Activated T-helper 1 cell treated with anti-CD3 and anti-CD28 coated beads, Interleukin-12 subunit alpha, Interleukin-12 subunit beta, Interleukin-2, Interleukin-4 antibody, amounts not matched to agents 30 ng/mL and 10 ng/mL and 1 ng/mL, durations not matched to agents 14 hours and 24 hours and 36 hours (primary cell): ENCODE measurements at regions of chr15 and their contacts with region 1.

Region 1: DNA sequence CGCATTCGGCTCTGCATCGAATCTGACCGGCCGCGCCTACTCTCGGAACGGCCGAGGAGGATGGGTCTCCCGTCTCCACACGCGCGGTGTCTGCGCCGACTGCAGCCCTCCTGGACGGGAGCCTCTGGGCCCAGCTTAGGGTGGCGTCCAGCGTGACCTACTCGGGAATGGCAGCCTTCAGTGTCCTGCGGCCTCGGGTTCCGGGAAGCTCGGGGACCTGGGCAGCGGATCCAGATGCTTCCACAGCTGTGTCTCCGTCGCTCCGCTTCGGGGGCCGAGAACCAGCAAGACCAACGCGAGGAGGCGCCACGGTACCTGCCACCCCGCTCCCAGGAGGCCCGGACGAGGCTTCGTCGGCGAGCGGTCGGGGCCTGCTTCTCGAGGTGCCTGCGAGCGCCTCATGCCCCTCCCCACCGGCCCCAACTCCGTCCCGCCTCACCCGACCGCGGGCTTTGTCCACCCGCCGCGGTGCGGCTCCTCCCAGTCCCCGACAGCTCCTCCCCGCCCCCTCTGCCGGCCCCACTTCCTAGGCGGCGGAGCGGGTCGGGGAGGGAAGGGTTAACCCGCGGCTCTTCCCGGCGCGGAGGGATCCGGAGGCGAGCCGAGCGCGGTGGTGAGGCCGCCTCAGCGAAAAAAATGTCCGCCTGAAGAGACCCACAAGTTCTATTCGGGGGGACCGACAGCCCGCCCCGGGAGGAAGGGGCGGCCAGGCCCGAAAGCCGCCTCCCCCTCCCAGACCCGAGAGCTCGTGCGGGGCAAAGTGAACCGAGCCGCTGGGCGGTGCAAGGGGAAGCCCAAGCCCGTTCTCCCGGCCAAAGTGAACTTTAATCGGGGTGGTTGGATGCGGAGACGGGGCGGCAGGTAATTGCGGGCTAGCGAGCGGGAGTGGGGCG is at the start of gene TCF12:
- DNase-seq: peak; percentile 87
- H3K4me3 Mint-ChIP-seq: peak within 1 kb of the TSS; percentile 82
- H3K27ac Mint-ChIP-seq: peak within 1 kb of the TSS; percentile 63
- H3K4me1 Mint-ChIP-seq: peaks cover 39% of the 10 kb centered on the region
- H3K27me3 Mint-ChIP-seq: no peaks in the 10 kb centered on the region
- total RNA-seq, gene TCF12: 85.7 and 89.2 TPM in 2 replicates

Region 2: DNA sequence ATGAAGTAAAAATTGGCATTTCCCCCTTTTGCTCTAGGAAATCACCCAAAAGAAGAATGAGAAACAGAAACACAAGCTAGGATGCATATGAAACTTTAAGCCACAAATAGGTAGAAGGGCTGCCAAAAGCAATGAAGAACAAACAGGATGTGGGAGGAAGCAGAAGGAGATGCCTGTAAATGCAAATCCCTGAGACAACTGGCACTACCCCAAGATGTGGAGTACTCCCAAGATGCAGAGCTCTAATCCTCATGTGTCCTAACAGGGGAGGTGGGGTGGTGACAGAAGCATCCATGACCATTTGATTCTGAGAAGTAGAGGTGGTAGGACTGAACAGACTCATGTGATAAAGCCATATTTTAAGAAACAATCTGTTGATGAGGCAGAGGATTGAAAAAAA is 153.0 kb before region 1 on chr15:
- intact Hi-C with region 1: loop called (anchors 5 kb)
- DNase-seq: peak; percentile 10
- H3K4me3 Mint-ChIP-seq: peak overlapping the region; percentile 16
- H3K27ac Mint-ChIP-seq: peak overlapping the region; percentile 83
- H3K4me1 Mint-ChIP-seq: peaks cover 40% of the 10 kb centered on the region
- H3K27me3 Mint-ChIP-seq: no peaks in the 10 kb centered on the region

Region 3: DNA sequence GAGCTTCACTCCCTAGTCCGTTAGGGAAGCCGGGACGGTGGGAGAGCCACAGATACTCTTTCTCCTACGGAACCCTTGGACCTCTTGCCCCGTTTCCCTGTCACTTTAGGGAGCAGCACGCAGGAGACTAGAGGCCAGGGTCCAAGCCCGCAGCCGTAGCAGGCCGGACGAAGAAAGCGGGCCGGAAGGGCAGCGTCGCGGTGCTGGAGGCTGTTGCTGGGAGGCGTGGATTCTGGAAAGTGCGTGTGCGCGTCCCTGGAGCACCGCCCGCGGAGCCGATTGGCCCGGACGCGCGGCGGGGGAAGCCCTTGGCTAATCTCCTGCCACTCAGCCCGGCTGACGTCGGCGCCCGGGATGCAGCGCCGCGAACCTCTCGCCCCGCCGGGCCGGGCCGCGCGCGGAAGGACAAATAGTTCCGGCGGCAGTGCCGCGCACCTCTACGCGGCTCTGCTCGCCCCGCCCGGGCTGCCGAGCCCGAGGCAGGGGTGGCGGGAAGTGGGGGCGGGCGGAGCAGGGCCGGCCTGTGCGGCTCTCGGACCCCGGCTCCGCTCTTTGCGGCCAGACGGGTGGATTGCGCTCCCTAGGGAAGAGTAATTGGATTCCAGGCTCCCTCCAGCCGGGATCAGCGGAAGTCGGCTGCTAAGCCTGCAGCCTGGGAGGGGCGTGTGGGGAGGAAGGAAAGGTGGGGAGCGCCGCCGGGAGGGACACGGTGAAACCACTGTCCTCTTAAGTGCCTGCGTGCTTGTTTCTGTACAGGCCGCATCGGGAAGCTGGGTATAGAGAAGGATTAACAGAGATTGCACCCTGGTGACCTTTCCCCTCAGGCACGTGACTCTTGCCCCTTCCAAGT is 31.1 kb before region 1 on chr15:
- intact Hi-C with region 1: loop called (anchors 1 kb)
- DNase-seq: peak; percentile 76
- H3K4me3 Mint-ChIP-seq: peak overlapping the region; percentile 85
- H3K27ac Mint-ChIP-seq: peak overlapping the region; percentile 85
- H3K4me1 Mint-ChIP-seq: peaks cover 27% of the 10 kb centered on the region
- H3K27me3 Mint-ChIP-seq: peaks cover 4% of the 10 kb centered on the region

Region 4: GRCh38 chr15:57133127-57133968 is 215.1 kb after region 1 on chr15:
- intact Hi-C with region 1: loop called (anchors 1 kb)
- DNase-seq: no peak
- H3K4me3 Mint-ChIP-seq: no peak overlapping the region
- H3K27ac Mint-ChIP-seq: peak overlapping the region; percentile 67
- H3K4me1 Mint-ChIP-seq: peaks cover 65% of the 10 kb centered on the region
- H3K27me3 Mint-ChIP-seq: no peaks in the 10 kb centered on the region

Region 5: DNA sequence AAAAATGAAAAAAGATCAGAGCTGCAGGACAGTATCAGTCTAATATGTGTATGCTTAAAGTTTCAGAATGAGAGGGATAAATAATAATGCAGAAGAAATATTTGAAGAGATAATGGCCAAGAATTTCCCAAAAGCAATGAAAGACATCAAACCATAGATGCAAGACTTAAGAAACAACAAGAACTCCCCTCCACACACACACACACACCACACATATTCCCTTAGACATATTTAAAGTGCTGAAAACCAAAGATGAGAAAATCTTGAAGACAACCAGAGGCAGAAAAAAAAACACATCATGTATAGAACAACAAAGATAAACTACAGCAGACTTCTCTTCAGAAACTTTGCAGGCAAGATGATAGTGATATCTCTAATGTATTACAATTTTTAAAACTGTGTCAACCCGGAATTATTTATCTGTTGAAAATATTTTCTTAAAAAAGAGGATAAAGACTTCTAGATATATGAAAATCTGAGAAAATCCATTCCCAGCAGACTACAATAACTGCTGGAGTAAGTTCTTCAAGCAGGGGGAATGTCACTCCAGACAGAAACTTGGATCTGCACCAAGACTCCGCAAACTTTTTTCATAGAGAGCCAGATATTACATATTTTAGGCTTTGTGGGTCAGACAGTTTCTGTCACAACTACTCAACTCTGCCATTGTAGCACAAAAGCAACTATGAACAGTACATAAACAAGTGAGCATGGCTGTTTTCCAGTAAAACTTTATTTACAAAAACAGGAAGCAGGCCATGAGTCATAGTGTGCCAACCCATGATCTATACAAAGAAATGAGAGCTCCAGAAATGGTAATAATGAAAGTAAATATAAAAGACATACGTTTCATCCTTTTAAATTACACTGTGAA is 234.6 kb after region 1 on chr15:
- intact Hi-C with region 1: loop called (anchors 1 kb)
- DNase-seq: peak; percentile 16
- H3K4me3 Mint-ChIP-seq: peak overlapping the region; percentile 1
- H3K27ac Mint-ChIP-seq: peak overlapping the region; percentile 86
- H3K4me1 Mint-ChIP-seq: peaks cover 26% of the 10 kb centered on the region
- H3K27me3 Mint-ChIP-seq: no peaks in the 10 kb centered on the region

Region 6: GRCh38 chr15:57306161-57306943 is 388.1 kb after region 1 on chr15:
- intact Hi-C with region 1: loop called (anchors 5 kb)
- DNase-seq: peak; percentile 75
- H3K4me3 Mint-ChIP-seq: peak overlapping the region; percentile 63
- H3K27ac Mint-ChIP-seq: no peak overlapping the region
- H3K4me1 Mint-ChIP-seq: peaks cover 4% of the 10 kb centered on the region
- H3K27me3 Mint-ChIP-seq: peaks cover 2% of the 10 kb centered on the region